ENCODE measurements at regions of chr11 and their contacts with region 1.

Region 1: GRCh38 chr11:122796128-122796717 is 42.1 kb upstream of the CRTAM start:
- DNase-seq: peak; percentile 84
- ATAC-seq: peak; percentile 91
- H3K4me3 Mint-ChIP-seq: no peak overlapping the region
- H3K27ac Mint-ChIP-seq: no peak overlapping the region
- H3K4me1 Mint-ChIP-seq: peaks cover 2% of the 10 kb centered on the region
- H3K27me3 Mint-ChIP-seq: no peaks in the 10 kb centered on the region

Region 2: DNA sequence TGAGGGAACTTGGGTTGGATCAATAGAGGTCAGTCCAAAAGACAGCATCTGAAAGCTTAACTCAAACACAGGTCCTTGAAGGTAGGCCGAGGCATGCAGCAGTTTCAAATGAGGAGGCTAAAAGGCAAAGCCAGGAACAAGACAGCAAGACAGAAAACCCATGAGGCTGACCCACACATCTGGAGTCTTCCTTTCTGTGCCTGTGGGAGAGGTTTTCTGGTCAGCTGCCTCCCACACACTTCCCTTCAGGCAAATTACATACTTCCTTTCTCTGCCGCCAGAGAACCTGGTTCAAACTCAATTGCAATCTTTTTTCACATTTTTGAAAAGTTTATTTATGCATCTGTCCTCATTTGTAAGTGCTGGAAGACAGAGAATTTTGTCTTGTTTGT is 12.3 kb after region 1 on chr11:
- CTCF ChIA-PET with region 1: interaction called, 35 read pairs
- POLR2A ChIA-PET with region 1: no interaction called
- intact Hi-C with region 1: no loop called
- DNase-seq: peak; percentile 35
- ATAC-seq: peak; percentile 30
- H3K4me3 Mint-ChIP-seq: no peak overlapping the region
- H3K27ac Mint-ChIP-seq: no peak overlapping the region
- H3K4me1 Mint-ChIP-seq: peaks cover 33% of the 10 kb centered on the region
- H3K27me3 Mint-ChIP-seq: no peaks in the 10 kb centered on the region